ENCODE measurements at regions of chr2 and their contacts with region 1.

Region 1: GRCh38 chr2:98385050-98385699 is 38.9 kb downstream of the CNGA3 start:
- DNase-seq: peak; percentile 92
- H3K4me3 Mint-ChIP-seq: no peak overlapping the region
- H3K27ac Mint-ChIP-seq: no peak overlapping the region
- H3K4me1 Mint-ChIP-seq: peaks cover 3% of the 10 kb centered on the region
- H3K27me3 Mint-ChIP-seq: peaks cover 12% of the 10 kb centered on the region

Region 2: GRCh38 chr2:97710596-97711386 is 674.4 kb before region 1 on chr2:
- intact Hi-C with region 1: loop called (anchors 2 kb)
- DNase-seq: peak; percentile 69
- H3K4me3 Mint-ChIP-seq: peak overlapping the region; percentile 17
- H3K27ac Mint-ChIP-seq: peak overlapping the region; percentile 100
- H3K4me1 Mint-ChIP-seq: peaks cover 49% of the 10 kb centered on the region
- H3K27me3 Mint-ChIP-seq: no peaks in the 10 kb centered on the region

Region 3: GRCh38 chr2:97740590-97741182 is 644.5 kb before region 1 on chr2:
- intact Hi-C with region 1: loop called (anchors 10 kb)
- DNase-seq: peak; percentile 82
- H3K4me3 Mint-ChIP-seq: no peak overlapping the region
- H3K27ac Mint-ChIP-seq: peak overlapping the region; percentile 76
- H3K4me1 Mint-ChIP-seq: peaks cover 58% of the 10 kb centered on the region
- H3K27me3 Mint-ChIP-seq: no peaks in the 10 kb centered on the region

Region 4: GRCh38 chr2:98568881-98569793 is 184.0 kb after region 1 on chr2:
- intact Hi-C with region 1: no loop called
- DNase-seq: peak; percentile 90
- H3K4me3 Mint-ChIP-seq: no peak overlapping the region
- H3K27ac Mint-ChIP-seq: peak overlapping the region; percentile 16
- H3K4me1 Mint-ChIP-seq: peaks cover 6% of the 10 kb centered on the region
- H3K27me3 Mint-ChIP-seq: no peaks in the 10 kb centered on the region

Measured in activated CD4-positive, alpha-beta T cell treated with anti-CD3 and anti-CD28 coated beads, Interleukin-2, amount 10 ng/mL, durations not matched to agents 24 days and 14 days (primary cell).